ENCODE measurements at regions of chr1 and their contacts with region 1.

Region 1: DNA sequence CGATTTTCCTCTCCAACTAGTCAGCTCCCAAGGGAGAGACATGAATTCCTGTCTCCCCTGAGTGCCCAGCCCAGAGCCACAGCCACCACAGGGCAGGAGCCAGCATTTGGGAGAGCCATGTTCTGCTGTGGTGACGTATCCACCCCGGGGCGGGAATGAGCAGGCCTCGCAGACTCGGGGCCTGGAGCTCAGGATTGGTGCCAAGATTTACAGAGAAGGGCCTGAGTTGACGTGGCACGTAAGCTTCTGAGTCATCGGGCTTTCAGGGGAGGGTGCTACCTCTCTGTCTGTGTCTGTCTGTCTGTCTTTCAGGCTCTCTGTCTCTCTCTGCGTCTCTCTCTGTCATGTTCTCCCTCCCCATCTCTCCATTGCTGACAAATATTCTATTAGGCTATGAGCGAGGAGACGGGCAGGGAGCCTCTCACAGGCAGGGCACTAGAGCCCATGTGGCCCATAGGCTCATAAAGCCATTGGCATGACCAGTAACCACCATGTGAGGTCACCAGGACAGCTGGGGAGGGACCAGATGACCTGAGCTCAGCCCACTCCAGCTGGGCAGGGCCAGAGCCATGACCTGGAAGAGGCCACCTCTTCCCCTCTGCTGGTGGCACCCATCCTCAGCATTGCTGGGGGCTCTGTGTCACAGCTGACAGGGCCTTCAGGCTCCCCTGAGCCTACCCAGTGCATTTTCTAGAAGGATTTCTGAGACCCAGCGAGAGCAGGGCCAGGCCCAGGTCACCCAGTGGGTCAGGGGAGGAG is 300.0 kb upstream of the VAMP3 start:
- DNase-seq: peak; percentile 94

Region 2: DNA sequence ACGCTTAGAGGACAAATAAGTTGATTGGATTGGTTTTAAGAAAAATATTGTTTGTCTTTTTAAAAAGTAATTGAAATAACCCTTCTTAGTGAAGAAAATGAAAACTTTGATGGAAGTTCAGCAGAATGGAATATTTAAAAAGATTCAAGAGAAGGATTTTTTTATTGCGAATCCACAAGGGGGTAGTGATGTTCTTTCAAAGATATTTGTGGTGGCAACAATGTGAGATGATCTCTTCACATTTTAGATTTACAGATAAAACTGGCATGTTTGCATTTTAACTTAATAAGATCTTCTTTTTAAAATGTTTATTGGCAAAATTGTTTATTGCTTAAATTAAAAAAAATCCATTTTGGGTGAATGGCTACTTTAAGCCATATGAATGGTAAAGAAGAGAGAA is 676.9 kb before region 1 on chr1:
- intact Hi-C with region 1: loop called in 1 of 2 experiments (anchors 10 kb)
- DNase-seq: no peak

Region 3: DNA sequence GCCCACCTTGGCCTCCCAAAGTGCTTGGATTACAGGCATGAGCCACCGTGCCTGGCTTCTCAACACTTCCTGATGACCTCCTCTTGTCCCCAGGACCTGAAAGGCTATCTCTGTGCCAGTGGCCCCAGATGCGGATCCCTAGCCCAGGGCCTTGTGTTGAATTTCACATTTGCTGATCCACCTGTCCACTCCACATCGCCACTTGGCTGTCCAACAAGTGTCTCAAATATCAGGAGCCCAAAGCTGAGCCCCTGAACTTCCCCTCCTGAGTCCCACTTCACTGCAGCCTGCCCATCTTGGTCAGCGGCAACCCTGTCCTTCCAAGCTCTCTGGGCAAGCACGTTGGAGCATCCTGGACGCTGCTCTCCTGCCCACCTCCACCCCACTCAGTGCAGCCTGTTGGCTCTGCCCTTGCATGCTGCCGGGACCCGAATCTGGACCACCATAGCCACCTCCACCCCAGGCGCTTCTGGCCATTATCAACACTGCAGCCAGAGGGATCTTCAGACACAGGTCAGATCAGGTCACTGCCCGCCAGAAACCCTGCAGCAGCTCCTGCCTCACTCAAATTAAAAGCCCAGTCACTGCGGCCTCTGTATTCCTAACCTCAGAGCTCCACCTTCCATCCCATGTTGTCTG is 52.5 kb before region 1 on chr1:
- intact Hi-C with region 1: loop called in 1 of 2 experiments (anchors 2 kb)
- DNase-seq: peak; percentile 63

Region 4: GRCh38 chr1:7436023-7437005 is 34.7 kb before region 1 on chr1:
- intact Hi-C with region 1: no loop called
- DNase-seq: no peak

Region 5: GRCh38 chr1:7516341-7516740 is 45.3 kb after region 1 on chr1:
- intact Hi-C with region 1: no loop called
- DNase-seq: no peak